Activated T-helper 2 cell treated with anti-CD3 and anti-CD28 coated beads, Interferon-gamma antibody, Interleukin-2, Interleukin-4, amounts not matched to agents 10 μg/mL and 5 μg/mL and 100 μg/mL, durations not matched to agents 14 hours and 24 hours and 36 hours (primary cell): ENCODE measurements at regions of chr2 and their contacts with region 1.

Region 1: GRCh38 chr2:189661148-189661956 is at the start of gene ASNSD1:
- DNase-seq: peak; percentile 98
- H3K4me3 Mint-ChIP-seq: no peak within 1 kb of the TSS
- H3K27ac Mint-ChIP-seq: no peak within 1 kb of the TSS
- H3K4me1 Mint-ChIP-seq: peaks cover 39% of the 10 kb centered on the region
- H3K27me3 Mint-ChIP-seq: no peaks in the 10 kb centered on the region
- total RNA-seq, gene ASNSD1: 52.0 and 52.7 TPM in 2 replicates

Region 2: GRCh38 chr2:189641590-189641989 is 19.8 kb before region 1 on chr2:
- intact Hi-C with region 1: loop called (anchors 1 kb)
- DNase-seq: no peak
- H3K4me3 Mint-ChIP-seq: no peak overlapping the region
- H3K27ac Mint-ChIP-seq: no peak overlapping the region
- H3K4me1 Mint-ChIP-seq: peaks cover 16% of the 10 kb centered on the region
- H3K27me3 Mint-ChIP-seq: no peaks in the 10 kb centered on the region

Region 3: GRCh38 chr2:189698020-189698887 is 36.9 kb after region 1 on chr2:
- intact Hi-C with region 1: loop called (anchors 1 kb)
- DNase-seq: no peak
- H3K4me3 Mint-ChIP-seq: no peak overlapping the region
- H3K27ac Mint-ChIP-seq: no peak overlapping the region
- H3K4me1 Mint-ChIP-seq: peaks cover 3% of the 10 kb centered on the region
- H3K27me3 Mint-ChIP-seq: no peaks in the 10 kb centered on the region

Region 4: DNA sequence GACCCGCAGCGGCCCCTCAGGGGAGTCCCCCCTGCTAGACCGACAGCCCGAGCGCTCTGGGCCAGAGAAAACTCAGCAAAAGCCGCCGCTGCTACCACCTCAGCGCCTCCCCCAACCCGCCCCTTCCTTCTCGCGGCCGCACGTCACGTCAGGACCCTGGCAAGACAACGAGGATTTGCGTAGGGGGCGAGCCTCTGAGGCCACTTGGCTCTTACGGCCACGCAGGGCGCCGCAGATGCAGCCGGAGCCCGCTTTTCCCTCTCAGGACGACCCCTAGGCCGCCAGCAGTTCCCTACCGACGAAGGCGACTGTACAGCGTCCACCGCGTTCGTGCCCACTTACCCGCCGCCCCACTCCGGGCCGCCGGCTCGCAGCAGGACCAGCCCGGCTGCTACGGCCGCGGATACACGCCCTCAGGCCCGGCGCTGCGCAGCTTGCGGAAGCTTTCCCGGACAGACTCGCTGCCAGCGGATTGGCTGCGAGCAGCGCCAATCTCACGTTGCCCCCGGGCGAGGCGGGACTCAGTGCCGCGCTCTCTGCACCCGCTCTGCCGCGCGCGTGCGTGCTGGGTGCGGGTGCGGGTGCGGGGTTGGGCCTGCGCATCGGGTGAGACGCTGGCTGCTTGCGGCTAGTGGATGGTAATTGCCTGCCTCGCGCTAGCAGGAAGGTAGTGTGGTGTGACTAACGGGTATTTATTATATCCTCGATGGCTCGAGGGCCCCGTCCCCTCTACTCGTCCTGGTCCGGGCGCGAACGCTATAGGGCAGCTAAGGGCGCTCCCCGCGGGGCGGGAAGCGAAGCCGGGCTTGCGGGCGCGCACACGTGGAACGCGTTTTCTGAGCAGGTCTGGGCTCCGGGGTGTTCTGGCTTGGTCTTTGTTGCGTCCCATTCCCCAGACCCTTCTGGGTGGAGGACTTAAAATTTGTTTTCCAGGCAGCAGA is 122.8 kb after region 1 on chr2 and contains the starts of genes ORMDL1 and PMS1:
- intact Hi-C with region 1: loop called (anchors 1 kb)
- DNase-seq: peak; percentile 94
- H3K4me3 Mint-ChIP-seq: peak within 1 kb of the TSS; percentile 90
- H3K27ac Mint-ChIP-seq: peak within 1 kb of the TSS; percentile 90
- H3K4me1 Mint-ChIP-seq: peaks cover 45% of the 10 kb centered on the region
- H3K27me3 Mint-ChIP-seq: no peaks in the 10 kb centered on the region
- total RNA-seq, gene ORMDL1: 68.8 and 72.1 TPM in 2 replicates
- total RNA-seq, gene PMS1: 57.0 and 58.7 TPM in 2 replicates

Region 5: DNA sequence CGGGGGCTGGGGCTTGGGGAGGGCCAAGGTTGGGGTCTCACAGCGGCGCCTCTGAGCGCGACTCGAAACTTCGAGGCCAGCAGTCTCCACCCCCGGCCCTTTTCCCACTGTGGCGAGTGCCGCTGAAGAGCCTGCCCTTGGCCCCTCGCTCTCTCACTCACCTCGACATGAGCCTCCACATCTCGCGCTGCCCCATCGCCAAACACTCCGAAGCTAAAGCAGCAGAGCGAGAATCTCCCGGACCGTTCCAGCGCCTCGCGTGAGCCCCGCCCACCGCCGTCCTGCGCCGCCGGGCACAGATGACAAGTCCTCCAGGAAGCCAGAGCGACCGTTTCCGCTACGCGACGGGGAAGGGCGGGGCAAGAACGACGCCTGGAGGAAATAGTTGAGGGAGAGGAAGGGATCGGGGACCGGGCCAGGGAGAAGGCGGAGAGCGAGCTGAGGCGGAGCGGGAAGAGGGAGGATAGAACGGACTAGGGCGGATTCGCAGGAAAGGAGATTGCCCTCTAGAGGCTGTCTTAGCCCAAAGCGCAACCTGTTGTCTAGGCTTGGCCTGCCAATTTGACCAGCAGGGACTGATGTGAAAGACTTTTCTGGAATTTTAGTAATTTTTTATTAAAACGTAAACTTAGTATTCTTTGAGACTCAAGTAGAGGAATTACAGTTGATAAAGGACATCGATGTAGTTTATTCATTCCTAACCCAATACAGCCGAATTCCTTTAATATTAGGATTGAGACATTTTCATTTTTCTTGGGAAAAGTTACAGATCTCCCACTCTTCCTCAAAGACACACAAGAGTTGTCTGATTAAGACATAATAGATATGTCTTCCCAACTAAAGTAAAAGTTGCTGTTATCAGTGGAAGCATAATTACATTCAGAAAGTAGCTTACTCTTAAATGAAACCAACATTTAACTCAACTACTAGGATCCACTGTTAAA is 658.5 kb after region 1 on chr2 and contains the start of gene HIBCH:
- intact Hi-C with region 1: loop called (anchors 5 kb)
- DNase-seq: peak; percentile 82
- H3K4me3 Mint-ChIP-seq: peak within 1 kb of the TSS; percentile 94
- H3K27ac Mint-ChIP-seq: peak within 1 kb of the TSS; percentile 96
- H3K4me1 Mint-ChIP-seq: peaks cover 51% of the 10 kb centered on the region
- H3K27me3 Mint-ChIP-seq: no peaks in the 10 kb centered on the region
- total RNA-seq, gene HIBCH: 24.5 and 26.0 TPM in 2 replicates